ENCODE measurements at regions of chr19 and their contacts with region 1.

Region 1: DNA sequence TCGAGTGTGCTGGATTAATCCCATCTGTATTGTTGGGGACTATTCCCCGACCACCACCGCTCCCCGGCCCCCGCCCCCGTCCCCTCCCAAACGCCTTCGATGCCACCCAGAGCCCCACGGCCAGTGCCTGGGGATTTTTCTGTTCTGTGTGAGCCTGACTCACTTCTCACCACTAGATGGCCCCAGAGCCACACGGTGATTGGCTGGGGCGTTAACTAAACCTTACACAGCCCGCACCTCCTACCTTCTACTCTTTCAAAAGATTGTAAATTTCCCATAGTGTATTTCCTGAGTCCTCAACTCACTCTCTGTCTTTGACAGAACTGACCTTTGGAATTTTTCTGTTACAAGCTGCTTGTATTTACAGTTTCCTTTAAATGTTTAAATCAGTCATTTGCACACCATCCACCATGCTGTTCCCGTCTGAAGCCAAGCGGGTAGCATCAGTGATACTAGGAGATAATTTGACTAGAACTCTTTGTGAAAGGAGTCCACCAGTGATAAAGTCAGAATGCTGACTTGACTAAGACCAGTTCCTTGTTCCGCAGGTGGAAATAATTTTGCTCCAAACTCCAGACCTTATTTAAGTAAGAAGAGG is 61.4 kb downstream of the RFX2 start:
- DNase-seq: peak; percentile 72
- H3K4me3 Mint-ChIP-seq: no peak overlapping the region
- H3K27ac Mint-ChIP-seq: no peak overlapping the region
- H3K4me1 Mint-ChIP-seq: no peaks in the 10 kb centered on the region
- H3K27me3 Mint-ChIP-seq: no peaks in the 10 kb centered on the region
- CTCF ChIP-seq: peak; percentile 42

Region 2: GRCh38 chr19:5987077-5987818 is 61.7 kb before region 1 on chr19:
- CTCF ChIA-PET with region 1: no interaction called
- intact Hi-C with region 1: loop called (anchors 2 kb)
- DNase-seq: peak; percentile 73
- H3K4me3 Mint-ChIP-seq: peak overlapping the region; percentile 28
- H3K27ac Mint-ChIP-seq: no peak overlapping the region
- H3K4me1 Mint-ChIP-seq: no peaks in the 10 kb centered on the region
- H3K27me3 Mint-ChIP-seq: no peaks in the 10 kb centered on the region
- CTCF ChIP-seq: peak; percentile 76